Caco-2 (cell line): ENCODE measurements at regions of chr1 and their contacts with region 1.

Region 1: GRCh38 chr1:47437447-47438164 is at the start of gene FOXD2:
- DNase-seq: peak; percentile 93 to 96
- H3K4me3 ChIP-seq: peak within 1 kb of the TSS; percentile 78
- H3K4me3 Mint-ChIP-seq: peak within 1 kb of the TSS; percentile 84
- H3K27ac Mint-ChIP-seq: peak within 1 kb of the TSS; percentile 49
- H3K4me1 ChIP-seq: no peaks in the 10 kb centered on the region
- H3K4me1 Mint-ChIP-seq: no peaks in the 10 kb centered on the region
- H3K27me3 ChIP-seq: no peaks in the 10 kb centered on the region
- H3K27me3 Mint-ChIP-seq: no peaks in the 10 kb centered on the region
- CTCF ChIP-seq: peak; percentile 50 to 95
- total RNA-seq, gene FOXD2: 4.4 and 4.6 TPM in 2 replicates

Region 2: DNA sequence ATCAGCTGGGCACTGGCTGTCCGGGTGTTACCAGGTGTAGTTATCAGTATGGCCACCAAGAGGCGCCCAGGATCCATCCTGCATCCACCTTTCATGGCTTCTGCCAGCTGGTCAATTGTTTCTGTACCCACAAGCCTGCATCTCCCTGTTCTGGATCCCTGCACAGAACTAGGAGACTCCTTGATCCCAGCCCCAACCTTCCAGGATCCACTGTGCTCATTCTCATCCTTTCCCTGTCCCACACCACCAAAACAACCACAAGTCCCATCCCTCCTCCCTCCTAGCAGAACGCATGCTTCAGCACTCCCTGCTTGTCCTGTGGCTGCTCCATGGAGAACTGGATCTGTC is 48.7 kb before region 1 on chr1:
- CTCF ChIA-PET with region 1: interaction called, 39 read pairs
- POLR2A ChIA-PET with region 1: interaction called, 4 read pairs
- intact Hi-C with region 1: loop called (anchors 5 kb)
- DNase-seq: peak; percentile 67 to 74
- H3K4me3 ChIP-seq: no peak overlapping the region
- H3K4me3 Mint-ChIP-seq: peak overlapping the region; percentile 15
- H3K27ac Mint-ChIP-seq: peak overlapping the region; percentile 69
- H3K4me1 ChIP-seq: peaks cover 48% of the 10 kb centered on the region
- H3K4me1 Mint-ChIP-seq: peaks cover 52% of the 10 kb centered on the region
- H3K27me3 ChIP-seq: no peaks in the 10 kb centered on the region
- H3K27me3 Mint-ChIP-seq: no peaks in the 10 kb centered on the region
- CTCF ChIP-seq: peak; percentile 70 to 74

Region 3: DNA sequence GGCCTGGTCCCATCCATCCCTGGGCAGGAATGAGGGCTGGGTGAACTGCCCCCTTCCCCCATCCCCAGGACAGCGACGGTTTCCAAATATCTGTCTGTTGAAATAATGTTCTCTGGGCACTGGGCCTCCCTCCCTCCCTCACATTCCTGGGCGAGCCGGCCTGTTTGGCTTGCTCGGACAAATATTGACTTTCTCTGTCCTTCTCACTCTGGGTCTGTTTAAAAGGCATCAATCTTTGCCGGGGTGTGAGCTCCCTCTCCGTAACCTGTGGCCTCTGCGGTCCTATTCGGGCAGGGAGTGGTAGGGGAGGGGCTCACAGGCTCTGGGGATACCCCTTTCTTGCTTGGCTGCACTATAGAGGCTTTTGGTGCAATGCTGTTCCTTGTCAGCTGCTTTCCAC is 40.5 kb after region 1 on chr1:
- CTCF ChIA-PET with region 1: interaction called, 71 read pairs
- POLR2A ChIA-PET with region 1: interaction called, 23 read pairs
- intact Hi-C with region 1: loop called (anchors 1 kb)
- DNase-seq: peak; percentile 91 to 93
- H3K4me3 ChIP-seq: peak overlapping the region; percentile 13; the same call in 1 of the 2 replicates
- H3K4me3 Mint-ChIP-seq: peak overlapping the region; percentile 67
- H3K27ac Mint-ChIP-seq: peak overlapping the region; percentile 94
- H3K4me1 ChIP-seq: peaks cover 50% of the 10 kb centered on the region
- H3K4me1 Mint-ChIP-seq: peaks cover 47% of the 10 kb centered on the region
- H3K27me3 ChIP-seq: no peaks in the 10 kb centered on the region
- H3K27me3 Mint-ChIP-seq: no peaks in the 10 kb centered on the region
- CTCF ChIP-seq: no peak

Region 4: GRCh38 chr1:47521034-47521881 is 83.7 kb after region 1 on chr1:
- CTCF ChIA-PET with region 1: interaction called, 12 read pairs
- POLR2A ChIA-PET with region 1: interaction called, 4 read pairs
- intact Hi-C with region 1: loop called (anchors 2 kb)
- DNase-seq: no peak
- H3K4me3 ChIP-seq: no peak overlapping the region
- H3K4me3 Mint-ChIP-seq: no peak overlapping the region
- H3K27ac Mint-ChIP-seq: no peak overlapping the region
- H3K4me1 ChIP-seq: no peaks in the 10 kb centered on the region
- H3K4me1 Mint-ChIP-seq: peaks cover 12% of the 10 kb centered on the region
- H3K27me3 ChIP-seq: no peaks in the 10 kb centered on the region
- H3K27me3 Mint-ChIP-seq: no peaks in the 10 kb centered on the region
- CTCF ChIP-seq: no peak

Region 5: GRCh38 chr1:47627471-47628370 is 190.1 kb after region 1 on chr1:
- CTCF ChIA-PET with region 1: interaction called, 13 read pairs
- POLR2A ChIA-PET with region 1: no interaction called
- intact Hi-C with region 1: loop called (anchors 1 kb)
- DNase-seq: peak; percentile 41 to 68
- H3K4me3 ChIP-seq: no peak overlapping the region
- H3K4me3 Mint-ChIP-seq: no peak overlapping the region
- H3K27ac Mint-ChIP-seq: peak overlapping the region; percentile 3
- H3K4me1 ChIP-seq: no peaks in the 10 kb centered on the region
- H3K4me1 Mint-ChIP-seq: peaks cover 7% of the 10 kb centered on the region
- H3K27me3 ChIP-seq: no peaks in the 10 kb centered on the region
- H3K27me3 Mint-ChIP-seq: peaks cover 3% of the 10 kb centered on the region
- CTCF ChIP-seq: no peak

Region 6: DNA sequence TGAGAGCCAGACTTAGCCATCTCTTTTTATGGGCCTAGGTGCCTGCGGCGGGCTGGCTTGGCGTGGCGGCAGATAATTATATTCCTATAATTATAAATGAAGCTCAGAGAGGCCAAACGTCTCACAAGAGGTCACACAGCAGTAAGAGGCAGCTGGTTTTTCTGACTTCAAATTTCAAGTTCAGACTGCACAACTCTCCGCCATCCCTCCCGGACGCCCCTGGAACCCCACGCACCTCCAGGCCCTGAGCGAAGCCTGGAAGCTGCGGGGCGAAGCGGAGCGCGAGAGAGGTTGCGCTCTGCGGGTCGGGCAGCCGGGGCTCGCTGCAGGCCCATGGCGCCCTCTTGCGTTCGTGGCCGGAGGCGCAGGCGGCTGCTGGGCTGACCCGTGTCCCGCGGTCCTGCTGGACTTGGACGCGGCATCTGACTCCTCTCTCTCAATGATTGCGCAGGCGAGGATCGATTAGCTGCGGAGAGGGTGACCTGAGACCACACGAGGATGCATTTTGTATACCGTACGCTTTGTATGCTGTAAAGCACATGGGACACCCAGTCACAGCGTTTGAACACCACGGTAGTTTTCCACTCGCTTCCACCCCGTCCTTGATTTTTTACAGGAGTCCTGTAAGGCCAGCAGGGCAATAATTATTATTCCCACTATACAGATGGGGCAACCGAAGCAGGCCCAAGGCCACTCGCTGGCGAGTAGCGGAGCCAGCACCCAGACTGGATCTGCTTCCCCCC is 272.9 kb after region 1 on chr1:
- CTCF ChIA-PET with region 1: interaction called, 48 read pairs
- POLR2A ChIA-PET with region 1: interaction called, 3 read pairs
- intact Hi-C with region 1: loop called (anchors 1 kb)
- DNase-seq: peak; percentile 60 to 84
- H3K4me3 ChIP-seq: peak overlapping the region; percentile 59
- H3K4me3 Mint-ChIP-seq: peak overlapping the region; percentile 73
- H3K27ac Mint-ChIP-seq: no peak overlapping the region
- H3K4me1 ChIP-seq: 0 out of 2 replicates have a peak, but pooled peaks cover 7% of the 10 kb centered on the region
- H3K4me1 Mint-ChIP-seq: peaks cover 6% of the 10 kb centered on the region
- H3K27me3 ChIP-seq: no peaks in the 10 kb centered on the region
- H3K27me3 Mint-ChIP-seq: peaks cover 4% of the 10 kb centered on the region
- CTCF ChIP-seq: peak; percentile 87 to 89